ENCODE measurements at regions of chr6 and their contacts with region 1.

Region 1: DNA sequence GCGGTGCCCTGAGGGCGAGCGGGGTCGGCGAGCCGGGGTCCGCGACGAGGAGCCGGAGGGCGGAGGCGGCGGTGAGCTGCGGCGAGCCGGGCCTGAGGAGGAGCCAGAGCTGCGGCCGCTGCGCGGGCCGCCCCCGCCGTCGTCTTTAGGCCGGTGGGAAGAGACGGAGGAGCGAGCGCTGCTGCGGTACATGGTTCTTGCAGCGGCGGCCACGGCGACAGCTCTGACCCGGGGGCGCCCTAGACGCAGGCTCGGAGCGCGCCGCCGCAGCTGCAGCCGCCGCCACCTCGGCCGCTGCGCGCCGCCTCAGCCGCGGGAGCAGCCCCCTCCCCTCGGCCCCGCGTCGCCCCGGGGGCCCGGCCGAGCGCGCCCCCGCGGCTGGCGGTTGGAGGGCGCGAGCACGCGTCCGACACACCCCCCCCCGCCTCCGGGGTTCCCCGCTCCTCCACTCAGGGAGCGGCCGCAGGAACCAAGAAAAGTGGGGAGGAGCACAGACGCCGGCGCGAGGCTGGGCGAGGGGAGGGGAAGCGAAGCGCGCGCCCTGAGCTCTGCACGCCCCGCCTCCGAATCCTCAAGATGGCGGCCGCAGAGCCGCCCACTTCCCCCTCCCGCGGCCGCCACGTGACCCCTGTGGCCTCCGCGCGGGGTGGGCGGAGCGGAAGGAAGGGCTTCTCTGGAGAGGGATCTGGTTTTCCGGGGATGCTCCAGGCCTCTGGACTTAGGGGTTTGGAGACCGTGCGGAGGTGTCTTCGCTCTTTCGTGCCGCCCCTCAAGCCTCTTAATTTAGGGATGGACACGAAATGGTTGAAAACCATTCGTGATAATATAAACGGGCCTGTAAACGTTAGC is at the start of gene ZNF318:
- DNase-seq: peak; percentile 95
- H3K4me3 Mint-ChIP-seq: peak within 1 kb of the TSS; percentile 87
- H3K27ac Mint-ChIP-seq: peak within 1 kb of the TSS; percentile 90
- H3K4me1 Mint-ChIP-seq: peaks cover 36% of the 10 kb centered on the region
- H3K27me3 Mint-ChIP-seq: no peaks in the 10 kb centered on the region
- total RNA-seq, gene ZNF318: 9.3 to 9.9 TPM

Region 2: GRCh38 chr6:43193939-43194338 is 175.5 kb before region 1 on chr6:
- CTCF ChIA-PET with region 1: no interaction called
- intact Hi-C with region 1: no loop called
- DNase-seq: no peak
- H3K4me3 Mint-ChIP-seq: no peak overlapping the region
- H3K27ac Mint-ChIP-seq: no peak overlapping the region
- H3K4me1 Mint-ChIP-seq: peaks cover 8% of the 10 kb centered on the region
- H3K27me3 Mint-ChIP-seq: no peaks in the 10 kb centered on the region

Region 3: GRCh38 chr6:43477235-43478007 is 108.0 kb after region 1 on chr6 and contains the start of gene TJAP1:
- CTCF ChIA-PET with region 1: no interaction called
- intact Hi-C with region 1: loop called (anchors 1 kb)
- DNase-seq: peak; percentile 98
- H3K4me3 Mint-ChIP-seq: peak within 1 kb of the TSS; percentile 87
- H3K27ac Mint-ChIP-seq: peak within 1 kb of the TSS; percentile 67
- H3K4me1 Mint-ChIP-seq: peaks cover 45% of the 10 kb centered on the region
- H3K27me3 Mint-ChIP-seq: no peaks in the 10 kb centered on the region
- total RNA-seq, gene TJAP1: 23.0 to 24.6 TPM

Region 4: GRCh38 chr6:43575772-43576551 is 206.6 kb after region 1 on chr6 and contains the starts of genes POLH and XPO5:
- CTCF ChIA-PET with region 1: no interaction called
- intact Hi-C with region 1: loop called (anchors 2 kb)
- DNase-seq: peak; percentile 92
- H3K4me3 Mint-ChIP-seq: peak within 1 kb of the TSS; percentile 93
- H3K27ac Mint-ChIP-seq: peak within 1 kb of the TSS; percentile 87
- H3K4me1 Mint-ChIP-seq: peaks cover 48% of the 10 kb centered on the region
- H3K27me3 Mint-ChIP-seq: no peaks in the 10 kb centered on the region
- total RNA-seq, gene POLH: 63.3 to 68.6 TPM
- total RNA-seq, gene XPO5: 74.9 to 93.2 TPM